ENCODE measurements at regions of chr2 and their contacts with region 1.

Region 1: DNA sequence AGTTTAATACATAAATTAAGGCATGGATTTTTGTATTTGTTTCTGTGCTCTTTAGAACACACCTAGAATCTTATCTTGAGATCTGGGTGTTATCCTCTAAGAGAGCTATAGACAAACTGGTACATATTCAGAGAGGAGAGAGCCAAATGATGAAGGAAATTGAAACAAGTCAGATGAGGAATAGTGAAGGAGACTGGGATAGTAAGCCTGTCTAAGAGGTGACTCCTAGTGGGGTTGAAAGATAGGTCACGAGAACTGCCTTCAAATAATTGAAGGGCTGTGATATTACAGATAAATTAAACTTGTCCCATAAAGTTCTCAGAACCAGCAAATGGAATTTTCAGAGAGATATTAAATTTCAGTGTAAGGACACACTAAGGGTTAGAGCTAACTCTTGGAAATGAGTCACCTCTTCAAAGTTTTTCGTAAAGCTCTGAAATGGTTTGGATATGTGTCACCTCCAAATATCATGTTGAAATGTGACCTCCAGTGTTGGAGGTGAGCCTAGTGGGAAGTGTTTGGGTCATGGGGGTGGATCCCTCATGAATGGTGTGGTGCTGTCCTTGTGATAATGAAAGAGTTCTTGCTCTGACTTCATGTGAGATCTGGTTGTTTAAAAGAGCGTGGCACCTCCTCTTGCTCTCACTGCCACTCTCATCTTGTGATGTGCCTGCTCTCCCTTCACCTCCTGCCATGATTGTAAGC is 87.2 kb downstream of the BABAM2 start:
- DNase-seq: peak; percentile 20
- H3K4me3 Mint-ChIP-seq: peak overlapping the region; percentile 23
- H3K27ac Mint-ChIP-seq: peak overlapping the region; percentile 81
- H3K4me1 Mint-ChIP-seq: peaks cover 34% of the 10 kb centered on the region
- H3K27me3 Mint-ChIP-seq: no peaks in the 10 kb centered on the region
- CTCF ChIP-seq: no peak

Region 2: DNA sequence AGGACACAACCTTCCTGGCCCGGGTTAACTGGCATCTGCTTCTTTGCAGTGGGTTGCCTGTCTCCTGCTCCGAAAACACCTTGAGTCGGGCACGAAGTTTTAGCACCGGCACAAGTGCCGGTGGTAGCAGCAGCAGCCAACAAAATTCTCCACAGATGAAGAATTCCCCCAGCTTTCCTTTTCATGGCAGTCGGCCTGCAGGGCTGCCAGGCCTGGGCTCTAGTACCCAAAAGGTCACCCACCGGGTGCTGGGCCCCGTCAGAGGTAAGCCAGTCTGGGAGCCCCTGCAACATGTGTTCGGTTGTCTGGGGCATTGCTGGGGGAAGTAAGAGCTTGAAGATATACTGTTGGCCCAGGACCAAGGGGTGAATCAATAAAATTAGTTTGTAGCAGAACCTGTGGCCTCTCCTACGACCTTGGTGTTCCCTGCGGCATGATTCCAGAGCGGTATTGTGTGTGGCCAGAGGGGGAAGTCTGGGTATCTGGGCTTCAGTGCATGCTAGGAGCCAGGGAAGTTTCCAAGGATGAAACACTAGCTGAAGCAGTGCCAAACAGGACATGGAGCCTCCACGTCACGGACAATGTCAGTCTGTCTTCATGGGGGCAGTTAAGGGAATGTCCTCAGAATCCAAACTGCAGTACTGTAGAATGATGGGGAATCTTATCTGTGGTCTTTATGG is 918.5 kb before region 1 on chr2:
- CTCF ChIA-PET with region 1: no interaction called
- intact Hi-C with region 1: no loop called
- DNase-seq: no peak
- H3K4me3 Mint-ChIP-seq: no peak overlapping the region
- H3K27ac Mint-ChIP-seq: no peak overlapping the region
- H3K4me1 Mint-ChIP-seq: no peaks in the 10 kb centered on the region
- H3K27me3 Mint-ChIP-seq: no peaks in the 10 kb centered on the region
- CTCF ChIP-seq: no peak

Region 3: GRCh38 chr2:27842894-27843293 is 134.9 kb before region 1 on chr2:
- CTCF ChIA-PET with region 1: no interaction called
- intact Hi-C with region 1: no loop called
- DNase-seq: no peak
- H3K4me3 Mint-ChIP-seq: no peak overlapping the region
- H3K27ac Mint-ChIP-seq: no peak overlapping the region
- H3K4me1 Mint-ChIP-seq: no peaks in the 10 kb centered on the region
- H3K27me3 Mint-ChIP-seq: no peaks in the 10 kb centered on the region
- CTCF ChIP-seq: no peak

Region 4: GRCh38 chr2:27920148-27920885 is 57.4 kb before region 1 on chr2:
- CTCF ChIA-PET with region 1: no interaction called
- intact Hi-C with region 1: no loop called
- DNase-seq: peak; percentile 14
- H3K4me3 Mint-ChIP-seq: peak overlapping the region; percentile 40
- H3K27ac Mint-ChIP-seq: peak overlapping the region; percentile 86
- H3K4me1 Mint-ChIP-seq: peaks cover 9% of the 10 kb centered on the region
- H3K27me3 Mint-ChIP-seq: no peaks in the 10 kb centered on the region
- CTCF ChIP-seq: no peak

Region 5: GRCh38 chr2:28047681-28048080 is 69.9 kb after region 1 on chr2:
- CTCF ChIA-PET with region 1: no interaction called
- intact Hi-C with region 1: loop called (anchors 5 kb)
- DNase-seq: no peak
- H3K4me3 Mint-ChIP-seq: no peak overlapping the region
- H3K27ac Mint-ChIP-seq: no peak overlapping the region
- H3K4me1 Mint-ChIP-seq: peaks cover 26% of the 10 kb centered on the region
- H3K27me3 Mint-ChIP-seq: no peaks in the 10 kb centered on the region
- CTCF ChIP-seq: no peak

Region 6: DNA sequence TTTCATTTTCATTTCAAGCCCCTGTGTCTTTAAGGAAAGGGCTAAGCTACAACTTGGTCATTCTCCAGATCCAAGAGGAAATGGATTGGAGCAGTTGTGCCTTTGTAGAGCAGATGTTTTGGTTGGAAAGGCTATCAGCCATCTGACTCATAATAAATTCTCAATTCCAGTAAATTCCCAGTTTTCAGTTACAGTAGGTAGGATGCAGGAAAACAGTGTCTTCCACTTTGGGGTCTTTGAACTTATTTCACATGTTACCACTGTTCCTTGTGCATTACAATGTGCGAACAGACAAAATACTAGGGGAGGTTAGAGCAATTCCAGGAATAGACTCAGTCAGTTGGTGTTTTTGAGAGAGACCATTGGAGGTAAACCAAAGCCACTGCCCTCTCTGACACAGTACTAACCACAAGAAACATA is 124.7 kb after region 1 on chr2:
- CTCF ChIA-PET with region 1: no interaction called
- intact Hi-C with region 1: no loop called
- DNase-seq: no peak
- H3K4me3 Mint-ChIP-seq: no peak overlapping the region
- H3K27ac Mint-ChIP-seq: no peak overlapping the region
- H3K4me1 Mint-ChIP-seq: no peaks in the 10 kb centered on the region
- H3K27me3 Mint-ChIP-seq: no peaks in the 10 kb centered on the region
- CTCF ChIP-seq: no peak